ACHN (cell line): ENCODE measurements at regions of chr4 and their contacts with region 1.

Region 1: DNA sequence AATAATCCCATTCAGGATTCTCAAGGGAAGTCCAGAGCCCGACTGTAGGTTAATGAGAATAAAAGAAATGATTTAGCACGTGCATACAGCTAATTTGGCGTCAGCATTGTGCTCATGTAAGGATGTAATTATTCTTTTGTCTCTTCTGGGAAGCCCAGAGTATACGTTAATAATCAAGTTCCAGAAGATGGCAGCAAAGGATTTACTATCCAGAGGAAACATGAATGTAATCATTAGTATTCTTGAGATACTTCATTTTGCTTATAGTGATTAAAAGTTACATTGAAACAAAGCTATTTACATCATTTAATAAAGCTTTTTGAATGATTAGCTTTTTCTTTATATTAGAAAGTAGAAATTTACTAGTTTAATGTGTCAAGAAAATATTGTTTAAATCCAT is 27.1 kb upstream of the MAP9 start:
- DNase-seq: peak; percentile 71

Region 2: GRCh38 chr4:155787113-155787710 is 383.3 kb after region 1 on chr4:
- in situ Hi-C with region 1: loop called (anchors 25 kb)
- DNase-seq: peak; percentile 73